Mammary epithelial cell (primary cell): ENCODE measurements at regions of chr6 and their contacts with region 1.

Region 1: DNA sequence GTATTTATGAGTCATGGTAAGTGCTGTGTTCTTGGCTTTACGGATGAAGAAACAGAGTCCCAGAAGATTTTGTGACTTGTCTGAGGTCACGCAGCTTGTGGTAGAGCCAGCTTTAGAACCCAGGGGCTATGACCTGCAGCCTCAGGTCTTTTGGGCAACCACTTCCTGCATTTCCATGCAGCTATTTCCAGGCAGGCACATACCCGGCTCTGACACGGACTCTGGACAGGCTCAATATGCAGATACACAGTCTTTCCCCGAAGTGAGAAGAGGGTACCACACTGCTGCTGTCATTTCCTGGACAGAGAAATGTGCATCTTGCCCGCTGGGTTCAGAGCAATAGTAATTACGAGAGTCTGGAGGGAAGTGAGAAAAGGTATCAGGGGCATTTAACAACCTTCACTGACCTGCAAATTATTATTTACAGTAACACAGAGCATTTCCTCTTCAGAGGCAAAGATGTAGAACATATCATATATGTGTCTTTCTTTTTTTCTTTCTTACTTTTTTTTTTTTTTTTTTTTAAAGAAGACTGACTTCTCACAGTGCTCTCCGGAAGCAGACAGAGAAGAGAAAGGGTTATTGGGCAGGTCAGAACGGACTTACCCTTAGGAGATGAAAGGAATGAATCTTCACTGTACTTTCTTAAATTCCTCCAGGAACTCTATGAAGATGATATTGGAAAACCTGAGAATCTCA is 185.1 kb downstream of the CLIC5 start:
- DNase-seq: peak; percentile 24
- H3K4me3 ChIP-seq: no peak overlapping the region
- H3K27ac ChIP-seq: no peak overlapping the region
- H3K4me1 ChIP-seq: peaks cover 20% of the 10 kb centered on the region
- H3K27me3 ChIP-seq: no peaks in the 10 kb centered on the region
- CTCF ChIP-seq: no peak

Region 2: DNA sequence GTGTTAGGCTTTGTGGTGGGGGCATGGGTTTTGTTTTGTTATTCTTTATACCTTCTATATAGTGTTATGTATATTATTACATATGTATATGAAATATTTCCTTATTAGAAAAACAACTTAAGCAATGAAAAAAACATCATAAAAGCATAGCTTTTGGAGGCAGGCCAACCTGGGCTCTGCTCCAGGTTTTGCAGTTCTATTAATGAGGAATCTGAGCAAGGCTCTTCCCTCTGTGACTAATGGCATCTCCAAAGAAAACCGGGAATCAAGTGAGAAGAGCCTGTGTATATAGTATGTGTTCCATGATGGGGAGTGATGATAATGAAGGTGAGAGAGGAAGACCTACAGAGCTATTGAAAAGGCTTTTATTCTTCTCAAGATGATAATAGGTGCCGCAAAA is 106.1 kb before region 1 on chr6:
- CTCF ChIA-PET with region 1: no interaction called
- dilution Hi-C with region 1: no loop called
- in situ Hi-C with region 1: no loop called
- intact Hi-C with region 1: loop called (anchors 10 kb)
- DNase-seq: peak; percentile 72
- H3K4me3 ChIP-seq: no peak overlapping the region
- H3K27ac ChIP-seq: no peak overlapping the region
- H3K4me1 ChIP-seq: peaks cover 14% of the 10 kb centered on the region
- H3K27me3 ChIP-seq: no peaks in the 10 kb centered on the region
- CTCF ChIP-seq: no peak

Region 3: DNA sequence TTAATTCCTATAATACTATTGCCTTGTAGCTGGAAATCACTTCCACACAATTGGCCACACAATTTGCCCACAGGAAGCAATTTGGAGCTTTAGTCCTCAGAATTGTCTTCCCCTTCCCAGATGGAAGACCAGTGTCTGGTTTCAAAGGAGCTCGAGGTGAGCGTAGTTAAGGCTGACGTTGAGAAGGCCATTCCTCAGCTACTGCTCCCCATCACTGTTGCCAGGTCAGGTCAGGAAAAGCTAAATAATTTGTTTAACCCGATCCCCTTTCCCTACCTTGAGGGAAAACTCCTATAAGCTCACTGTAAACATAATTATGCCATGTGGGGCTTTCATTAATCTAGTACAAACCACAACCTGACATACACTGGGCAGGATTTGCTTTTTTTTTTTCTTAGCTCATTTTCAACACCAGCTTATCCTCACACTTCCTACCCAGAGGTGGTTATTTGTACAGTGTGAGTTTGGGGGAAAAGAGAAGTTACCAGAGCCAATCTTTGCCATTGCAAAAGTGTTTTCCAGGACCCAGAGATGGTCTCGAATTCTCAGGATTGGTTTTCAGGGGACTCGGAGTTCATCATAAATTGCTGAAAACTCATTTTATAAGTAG is 57.6 kb before region 1 on chr6:
- CTCF ChIA-PET with region 1: interaction called, 17 read pairs
- dilution Hi-C with region 1: no loop called
- in situ Hi-C with region 1: no loop called
- intact Hi-C with region 1: no loop called
- DNase-seq: no peak
- H3K4me3 ChIP-seq: no peak overlapping the region
- H3K27ac ChIP-seq: no peak overlapping the region
- H3K4me1 ChIP-seq: peaks cover 6% of the 10 kb centered on the region
- H3K27me3 ChIP-seq: no peaks in the 10 kb centered on the region
- CTCF ChIP-seq: no peak